HAP-1 (cell line): ENCODE measurements at regions of chr10 and their contacts with region 1.

Region 1: GRCh38 chr10:97463363-97464132 is 17.6 kb downstream of the ZDHHC16 start:
- DNase-seq: peak; percentile 44 to 72
- H3K4me3 ChIP-seq: no peak overlapping the region
- H3K4me1 ChIP-seq: no peaks in the 10 kb centered on the region
- H3K27me3 ChIP-seq: no peaks in the 10 kb centered on the region

Region 2: DNA sequence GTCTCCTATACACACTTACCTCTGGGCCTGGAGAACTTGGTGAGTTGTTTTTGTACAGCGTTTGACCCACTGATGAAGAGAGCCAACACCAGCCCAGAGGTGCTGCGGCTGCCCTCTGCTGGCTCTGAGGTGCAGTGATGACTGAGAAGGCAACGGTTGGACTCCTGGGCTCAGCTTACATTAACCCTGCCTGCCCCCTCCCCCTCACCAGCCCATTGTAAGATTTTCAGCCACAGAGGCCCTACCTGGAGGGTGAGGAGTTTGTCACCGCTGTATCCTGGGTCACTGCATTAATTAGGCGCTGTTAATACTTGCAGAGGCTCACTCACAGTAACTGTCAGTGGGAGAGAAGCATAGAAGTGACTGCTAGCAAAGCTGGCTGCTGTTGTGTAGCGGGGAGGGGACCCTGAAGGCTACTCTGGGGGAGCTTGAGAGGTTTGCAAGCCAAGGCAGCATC is 90.1 kb after region 1 on chr10:
- in situ Hi-C with region 1: loop called (anchors 5 kb)
- DNase-seq: peak; percentile 62 to 80
- H3K4me3 ChIP-seq: no peak overlapping the region
- H3K4me1 ChIP-seq: peaks cover 2% of the 10 kb centered on the region; the same call in 1 of the 2 replicates
- H3K27me3 ChIP-seq: no peaks in the 10 kb centered on the region

Region 3: DNA sequence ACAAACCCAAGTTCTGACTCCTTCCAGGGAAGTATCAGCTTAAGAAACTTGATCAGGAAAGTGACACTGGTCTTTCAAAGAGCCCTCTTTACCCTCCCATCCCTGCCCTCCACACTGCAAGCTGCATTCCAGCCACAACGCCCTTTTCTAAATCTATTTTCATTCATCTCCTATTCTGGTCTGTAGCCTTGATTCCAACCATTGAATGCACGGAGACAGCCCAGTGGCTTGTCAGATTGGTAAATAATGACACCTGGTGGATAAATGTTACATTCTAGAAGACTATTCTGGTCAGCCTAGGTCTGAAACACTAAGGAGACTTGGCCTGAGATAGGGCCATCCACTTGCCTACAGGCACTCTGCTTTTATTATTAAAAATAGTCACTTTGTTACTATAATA is 148.8 kb after region 1 on chr10:
- in situ Hi-C with region 1: loop called (anchors 5 kb)
- DNase-seq: peak; percentile 56 to 60
- H3K4me3 ChIP-seq: no peak overlapping the region
- H3K4me1 ChIP-seq: 0 out of 2 replicates have a peak, but pooled peaks cover 3% of the 10 kb centered on the region
- H3K27me3 ChIP-seq: no peaks in the 10 kb centered on the region